HEK293 (cell line): ENCODE measurements at regions of chr17 and their contacts with region 1.

Region 1: GRCh38 chr17:10844621-10845387 is 6.9 kb upstream of the PIRT start:
- H3K4me3 ChIP-seq: peak overlapping the region; percentile 41
- H3K27ac ChIP-seq: no peak overlapping the region
- H3K4me1 ChIP-seq: peaks cover 2% of the 10 kb centered on the region; the same call in 1 of the 2 replicates
- CTCF ChIP-seq: peak; percentile 84

Region 2: GRCh38 chr17:10631048-10631700 is 213.6 kb before region 1 on chr17:
- CTCF ChIA-PET with region 1: interaction called, 10 read pairs
- POLR2A ChIA-PET with region 1: no interaction called
- H3K4me3 ChIP-seq: no peak overlapping the region
- H3K27ac ChIP-seq: no peak overlapping the region
- H3K4me1 ChIP-seq: no peaks in the 10 kb centered on the region
- CTCF ChIP-seq: peak; percentile 49

Region 3: GRCh38 chr17:10737168-10737622 is 107.6 kb before region 1 on chr17:
- CTCF ChIA-PET with region 1: interaction called, 93 read pairs
- POLR2A ChIA-PET with region 1: no interaction called
- H3K4me3 ChIP-seq: no peak overlapping the region
- H3K27ac ChIP-seq: no peak overlapping the region
- H3K4me1 ChIP-seq: no peaks in the 10 kb centered on the region
- CTCF ChIP-seq: peak; percentile 85

Region 4: GRCh38 chr17:10754109-10754508 is 90.7 kb before region 1 on chr17:
- CTCF ChIA-PET with region 1: interaction called, 62 read pairs
- POLR2A ChIA-PET with region 1: no interaction called
- H3K4me3 ChIP-seq: no peak overlapping the region
- H3K27ac ChIP-seq: no peak overlapping the region
- H3K4me1 ChIP-seq: no peaks in the 10 kb centered on the region
- CTCF ChIP-seq: no peak

Region 5: DNA sequence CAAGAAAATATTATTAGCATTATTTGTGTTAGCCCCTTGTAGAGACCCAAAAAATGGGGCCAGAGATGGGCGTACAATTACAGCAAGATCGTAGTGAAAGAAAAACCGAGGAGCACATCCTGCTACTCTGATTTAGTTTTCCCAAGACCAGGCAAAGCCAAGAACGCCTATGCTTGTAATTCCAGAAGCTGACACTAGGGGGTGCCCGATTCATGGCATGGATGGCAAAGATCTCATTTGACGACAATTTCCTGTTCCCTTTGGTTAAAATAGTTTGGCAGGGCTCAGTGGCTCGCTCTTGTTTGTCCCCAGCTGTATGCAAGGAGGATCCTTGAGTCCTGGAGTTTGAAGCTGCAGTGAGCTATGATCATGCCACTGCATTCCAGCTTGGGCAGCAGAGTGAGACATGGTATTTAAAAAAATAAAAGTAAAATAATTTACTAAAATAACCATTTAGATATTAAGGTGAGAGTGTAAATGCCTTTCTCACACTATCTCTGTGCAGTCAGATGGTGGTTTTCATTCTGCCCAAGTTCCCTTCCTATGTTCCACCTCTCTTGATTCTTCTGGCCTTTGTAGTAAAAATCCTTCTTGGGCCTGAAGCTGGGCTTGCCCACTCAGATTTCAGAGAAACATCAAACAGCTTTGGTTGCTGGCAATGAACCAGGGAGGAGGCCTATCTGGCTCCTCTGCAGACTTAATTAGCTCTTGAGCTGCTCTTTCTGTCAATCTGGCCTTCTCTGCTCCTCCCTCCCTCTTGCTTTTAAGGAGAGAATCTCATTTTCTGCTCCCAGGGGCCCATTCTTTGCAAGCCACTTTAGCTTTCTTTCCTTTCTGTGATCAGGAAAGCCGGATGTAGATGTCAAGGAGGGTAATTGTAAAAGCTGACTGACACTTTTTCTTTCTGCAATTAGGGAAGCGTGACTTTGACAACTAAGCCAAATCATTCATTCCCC is 72.1 kb before region 1 on chr17:
- CTCF ChIA-PET with region 1: interaction called, 21 read pairs
- POLR2A ChIA-PET with region 1: no interaction called
- H3K4me3 ChIP-seq: no peak overlapping the region
- H3K27ac ChIP-seq: no peak overlapping the region
- H3K4me1 ChIP-seq: no peaks in the 10 kb centered on the region
- CTCF ChIP-seq: peak; percentile 46; the same call in 1 of the 2 replicates